AG04449 (cell line): ENCODE measurements at regions of chr4 and their contacts with region 1.

Region 1: GRCh38 chr4:153318696-153319320 is 25.7 kb upstream of the MND1 start:
- DNase-seq: no peak
- H3K4me3 ChIP-seq: no peak overlapping the region
- CTCF ChIP-seq: peak; percentile 64

Region 2: GRCh38 chr4:153156263-153156662 is 162.5 kb before region 1 on chr4:
- CTCF ChIA-PET with region 1: interaction called, 26 read pairs
- POLR2A ChIA-PET with region 1: no interaction called
- DNase-seq: no peak
- H3K4me3 ChIP-seq: no peak overlapping the region
- CTCF ChIP-seq: peak; percentile 18

Region 3: DNA sequence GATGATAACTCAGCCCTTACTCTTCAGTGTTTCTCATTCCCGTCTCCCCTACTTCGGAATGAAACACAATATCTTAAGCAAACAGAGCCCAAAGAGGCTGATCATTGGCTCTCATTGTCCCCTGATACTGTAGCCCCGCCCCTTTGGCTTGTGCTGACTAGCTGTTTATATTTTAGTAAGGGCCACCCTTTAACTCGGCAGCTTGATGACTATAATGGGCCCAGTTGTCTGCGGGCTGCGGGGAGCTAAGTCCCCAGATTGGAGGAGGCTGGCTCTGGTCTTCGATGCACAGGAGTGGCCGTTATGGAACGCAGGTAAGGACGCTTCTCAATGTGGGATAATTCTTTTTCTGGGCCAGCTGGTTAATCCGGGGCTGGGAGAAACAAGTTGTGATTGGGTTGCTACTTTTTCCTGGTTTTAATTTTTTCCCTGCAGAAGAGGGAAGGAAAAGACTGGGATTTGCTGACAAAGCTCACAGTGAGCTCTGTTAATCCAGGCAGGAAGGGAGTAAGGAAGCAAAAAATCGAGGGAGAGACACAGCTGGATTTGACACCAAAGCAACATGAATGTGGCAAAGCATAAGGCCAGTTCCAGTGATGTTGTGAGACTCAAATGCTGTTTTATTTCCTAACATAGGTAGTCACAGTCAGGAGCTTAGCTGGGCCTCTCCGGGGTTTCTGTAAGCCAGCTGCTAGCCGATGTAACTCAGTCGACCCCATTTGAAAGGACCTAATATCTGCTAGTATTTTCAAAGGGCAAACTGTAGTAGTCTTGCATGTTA is 114.4 kb before region 1 on chr4 and contains the start of gene TRIM2:
- CTCF ChIA-PET with region 1: interaction called, 12 read pairs
- POLR2A ChIA-PET with region 1: no interaction called
- DNase-seq: no peak
- H3K4me3 ChIP-seq: peak within 1 kb of the TSS; percentile 37
- CTCF ChIP-seq: no peak